ENCODE measurements at regions of chr15 and their contacts with region 1.

Region 1: GRCh38 chr15:73704869-73705645 is 20.9 kb downstream of the CD276 start:
- DNase-seq: peak; percentile 84
- ATAC-seq: peak; percentile 71
- H3K4me3 Mint-ChIP-seq: no peak overlapping the region
- H3K27ac Mint-ChIP-seq: no peak overlapping the region
- H3K4me1 Mint-ChIP-seq: peaks cover 9% of the 10 kb centered on the region
- H3K27me3 Mint-ChIP-seq: no peaks in the 10 kb centered on the region
- CTCF ChIP-seq: peak; percentile 83

Region 2: GRCh38 chr15:73560501-73561117 is 144.4 kb before region 1 on chr15:
- CTCF ChIA-PET with region 1: interaction called, 11 read pairs
- POLR2A ChIA-PET with region 1: no interaction called
- DNase-seq: no peak
- ATAC-seq: peak; percentile 46; the same call in 1 of the 2 replicates
- H3K4me3 Mint-ChIP-seq: no peak overlapping the region
- H3K27ac Mint-ChIP-seq: no peak overlapping the region
- H3K4me1 Mint-ChIP-seq: peaks cover 13% of the 10 kb centered on the region
- H3K27me3 Mint-ChIP-seq: no peaks in the 10 kb centered on the region
- CTCF ChIP-seq: no peak; the same call in 1 of the 2 replicates

Region 3: DNA sequence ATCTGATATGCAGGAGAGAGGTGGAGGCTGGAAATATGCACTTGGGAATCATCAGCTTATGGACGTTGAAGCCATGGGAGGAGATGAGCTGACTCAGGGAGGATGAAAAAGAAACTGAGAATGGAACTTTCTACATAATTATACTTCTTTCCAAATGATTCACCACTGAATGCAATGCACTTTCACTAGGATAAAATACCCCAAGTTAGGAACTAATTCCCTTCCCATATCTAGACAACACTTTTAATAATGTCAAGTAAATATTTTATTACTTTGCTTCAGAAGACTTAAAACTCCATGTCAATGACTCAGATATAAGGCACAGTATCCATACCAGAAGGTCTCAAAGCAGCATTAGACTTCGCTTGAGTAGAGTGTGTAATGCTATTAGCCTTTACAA is 96.1 kb before region 1 on chr15:
- CTCF ChIA-PET with region 1: interaction called, 12 read pairs
- POLR2A ChIA-PET with region 1: no interaction called
- DNase-seq: no peak
- ATAC-seq: no peak
- H3K4me3 Mint-ChIP-seq: no peak overlapping the region
- H3K27ac Mint-ChIP-seq: peak overlapping the region; percentile 3; the same call in 1 of the 2 replicates
- H3K4me1 Mint-ChIP-seq: peaks cover 45% of the 10 kb centered on the region
- H3K27me3 Mint-ChIP-seq: 0 out of 2 replicates have a peak, but pooled peaks cover 2% of the 10 kb centered on the region
- CTCF ChIP-seq: no peak

Region 4: GRCh38 chr15:73683777-73684580 is 21.1 kb before region 1 on chr15 and contains the start of gene CD276:
- CTCF ChIA-PET with region 1: interaction called, 98 read pairs
- POLR2A ChIA-PET with region 1: interaction called, 3 read pairs
- DNase-seq: peak; percentile 80
- ATAC-seq: peak; percentile 72
- H3K4me3 Mint-ChIP-seq: peak within 1 kb of the TSS; percentile 81
- H3K27ac Mint-ChIP-seq: peak within 1 kb of the TSS; percentile 85
- H3K4me1 Mint-ChIP-seq: peaks cover 35% of the 10 kb centered on the region
- H3K27me3 Mint-ChIP-seq: no peaks in the 10 kb centered on the region
- CTCF ChIP-seq: no peak
- total RNA-seq, gene CD276: 146 to 153 TPM (median 150 TPM) in 3 replicates

Region 5: DNA sequence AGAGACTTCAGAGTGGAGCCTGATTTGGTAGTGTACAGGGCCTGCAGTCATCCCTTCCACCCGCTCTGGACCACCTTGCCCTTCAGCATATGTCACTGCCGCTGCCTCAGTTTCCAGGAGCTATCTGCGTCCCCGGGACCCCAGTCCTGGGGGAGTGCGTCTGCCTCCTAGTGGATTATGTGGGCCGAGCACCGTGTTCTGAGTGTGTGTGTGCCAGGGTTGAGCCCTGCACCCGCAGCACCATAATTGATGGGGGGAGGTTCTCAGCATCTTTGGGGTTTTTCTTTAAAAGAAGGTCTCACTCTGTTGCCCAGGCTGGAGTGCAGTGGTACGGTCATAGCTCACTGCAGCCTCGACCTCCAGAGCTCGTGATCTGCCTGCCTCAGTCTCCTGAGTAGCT is 12.7 kb after region 1 on chr15:
- CTCF ChIA-PET with region 1: interaction called, 66 read pairs
- POLR2A ChIA-PET with region 1: no interaction called
- DNase-seq: peak; percentile 49
- ATAC-seq: peak; percentile 62; the same call in 1 of the 2 replicates
- H3K4me3 Mint-ChIP-seq: no peak overlapping the region
- H3K27ac Mint-ChIP-seq: no peak overlapping the region
- H3K4me1 Mint-ChIP-seq: no peaks in the 10 kb centered on the region
- H3K27me3 Mint-ChIP-seq: no peaks in the 10 kb centered on the region; the same call in 1 of the 2 replicates
- CTCF ChIP-seq: peak; percentile 41

Region 6: GRCh38 chr15:73746883-73747282 is 41.8 kb after region 1 on chr15:
- CTCF ChIA-PET with region 1: interaction called, 32 read pairs
- POLR2A ChIA-PET with region 1: no interaction called
- DNase-seq: no peak
- ATAC-seq: no peak
- H3K4me3 Mint-ChIP-seq: no peak overlapping the region
- H3K27ac Mint-ChIP-seq: no peak overlapping the region
- H3K4me1 Mint-ChIP-seq: peaks cover 50% of the 10 kb centered on the region
- H3K27me3 Mint-ChIP-seq: peaks cover 14% of the 10 kb centered on the region
- CTCF ChIP-seq: no peak

Region 7: DNA sequence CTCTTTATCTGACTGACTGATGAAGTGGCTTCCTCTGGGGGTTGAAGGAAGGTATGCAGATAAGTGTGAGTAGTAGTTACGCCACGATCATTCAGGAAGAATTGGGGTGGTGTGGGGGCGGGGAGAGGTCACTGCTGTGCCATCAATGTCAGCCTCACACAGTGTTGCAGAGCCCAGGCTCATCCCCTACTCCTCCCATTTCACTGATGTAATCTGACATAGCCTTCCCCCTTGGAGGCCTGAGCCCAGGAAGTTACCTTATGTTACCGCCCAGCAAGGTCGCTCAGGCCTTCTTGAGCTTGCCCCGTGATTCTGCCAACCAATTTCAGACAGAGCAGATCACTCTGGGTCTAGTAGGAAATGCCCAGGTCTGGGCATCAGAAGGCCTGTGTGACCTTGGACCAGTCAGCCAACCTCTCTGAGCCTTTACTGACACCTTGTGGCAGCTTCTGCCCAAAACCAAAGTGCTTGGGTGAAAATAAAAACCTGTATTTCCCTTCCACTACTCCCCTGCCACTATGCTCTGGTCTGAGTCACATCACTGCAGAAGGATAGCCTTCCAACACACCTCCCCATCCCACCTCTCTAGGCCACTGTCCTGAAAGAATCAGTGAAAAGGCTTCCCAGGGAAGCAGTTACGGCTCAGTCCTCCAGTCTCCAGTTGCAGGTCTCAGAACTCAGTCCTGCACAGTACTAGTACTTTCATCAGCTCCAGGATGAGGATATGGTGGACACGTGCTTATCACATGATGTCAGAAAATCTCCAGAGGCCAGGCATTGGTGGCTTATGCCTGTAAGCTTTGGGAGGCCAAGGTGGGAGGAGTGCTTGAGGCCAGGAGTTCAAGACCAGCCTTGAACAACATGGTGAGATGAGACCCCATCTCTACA is 76.2 kb after region 1 on chr15:
- CTCF ChIA-PET with region 1: interaction called, 17 read pairs
- POLR2A ChIA-PET with region 1: no interaction called
- DNase-seq: no peak
- ATAC-seq: peak; percentile 75
- H3K4me3 Mint-ChIP-seq: no peak overlapping the region
- H3K27ac Mint-ChIP-seq: no peak overlapping the region
- H3K4me1 Mint-ChIP-seq: peaks cover 44% of the 10 kb centered on the region
- H3K27me3 Mint-ChIP-seq: no peaks in the 10 kb centered on the region; the same call in 1 of the 2 replicates
- CTCF ChIP-seq: 0 out of 2 replicates have a peak, but pooled peaks have one; percentile 29

Region 8: DNA sequence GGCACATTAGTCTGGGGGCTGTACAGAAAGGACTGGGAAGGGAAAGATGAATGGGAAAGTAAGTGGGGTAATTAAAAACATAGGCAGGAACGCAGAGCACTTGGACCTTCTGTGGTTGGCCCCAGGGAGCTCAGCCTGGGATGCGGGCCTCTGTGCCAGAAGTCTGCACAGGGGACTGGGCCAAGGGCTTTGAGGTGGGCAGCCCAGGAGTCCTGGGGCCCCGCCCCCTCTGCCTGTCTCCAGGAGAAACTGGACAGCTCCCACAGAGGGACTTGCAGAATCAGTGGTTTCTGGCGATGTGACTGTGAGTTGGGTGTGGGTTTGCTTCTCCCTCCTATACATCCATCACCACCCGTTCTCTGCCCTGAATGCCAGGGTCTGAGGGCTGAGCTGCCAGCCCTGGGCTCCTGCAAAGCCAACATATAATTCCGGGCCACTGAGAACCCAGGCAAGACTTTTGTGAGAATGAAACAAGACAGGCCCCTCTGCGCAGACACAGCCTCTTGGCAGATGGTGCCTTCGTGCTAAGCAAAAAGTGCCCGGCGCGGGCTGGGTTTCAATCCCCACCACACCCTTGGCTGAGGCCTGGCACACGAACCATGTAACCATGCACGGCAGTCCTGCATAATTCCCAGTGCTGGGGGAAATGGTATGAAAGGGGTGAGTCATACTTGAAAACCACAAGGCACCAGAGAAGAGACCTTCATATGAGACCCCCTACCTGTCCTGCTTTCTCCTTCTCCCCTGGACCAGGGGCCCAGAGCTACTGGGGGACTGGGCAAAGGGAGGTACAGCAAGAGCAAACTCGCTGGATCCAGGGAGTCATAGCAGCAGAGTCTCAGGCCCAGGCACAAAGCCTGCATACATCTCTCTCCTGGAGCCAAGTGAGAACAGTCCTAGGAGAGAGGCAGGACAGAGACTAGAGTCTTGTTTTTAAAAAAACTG is 195.0 kb after region 1 on chr15:
- CTCF ChIA-PET with region 1: no interaction called
- POLR2A ChIA-PET with region 1: no interaction called
- DNase-seq: no peak
- ATAC-seq: no peak
- H3K4me3 Mint-ChIP-seq: no peak overlapping the region
- H3K27ac Mint-ChIP-seq: no peak overlapping the region
- H3K4me1 Mint-ChIP-seq: peaks cover 10% of the 10 kb centered on the region
- H3K27me3 Mint-ChIP-seq: no peaks in the 10 kb centered on the region
- CTCF ChIP-seq: no peak

Region 9: GRCh38 chr15:73936181-73936580 is 231.1 kb after region 1 on chr15:
- CTCF ChIA-PET with region 1: no interaction called
- POLR2A ChIA-PET with region 1: no interaction called
- DNase-seq: no peak
- ATAC-seq: peak; percentile 33; the same call in 1 of the 2 replicates
- H3K4me3 Mint-ChIP-seq: no peak overlapping the region
- H3K27ac Mint-ChIP-seq: no peak overlapping the region
- H3K4me1 Mint-ChIP-seq: peaks cover 14% of the 10 kb centered on the region
- H3K27me3 Mint-ChIP-seq: no peaks in the 10 kb centered on the region
- CTCF ChIP-seq: no peak

Measured in WTC11 (cell line).